CD4-positive, alpha-beta T cell (primary cell): ENCODE measurements at regions of chr7 and their contacts with region 1.

Region 1: GRCh38 chr7:100271716-100272537 is 35.6 kb upstream of the SPDYE3 start:
- DNase-seq: peak; percentile 97 to 100 (median 98)
- ATAC-seq: peak; percentile 91
- H3K4me3 ChIP-seq: peak overlapping the region; percentile 52
- H3K4me3 Mint-ChIP-seq: peak overlapping the region; percentile 85
- H3K27ac ChIP-seq: no peak overlapping the region
- H3K27ac Mint-ChIP-seq: peak overlapping the region; percentile 69
- H3K4me1 ChIP-seq: peaks cover 17% of the 10 kb centered on the region
- H3K4me1 Mint-ChIP-seq: peaks cover 8% of the 10 kb centered on the region
- H3K27me3 ChIP-seq: no peaks in the 10 kb centered on the region
- H3K27me3 Mint-ChIP-seq: no peaks in the 10 kb centered on the region
- CTCF ChIP-seq: no peak

Region 2: DNA sequence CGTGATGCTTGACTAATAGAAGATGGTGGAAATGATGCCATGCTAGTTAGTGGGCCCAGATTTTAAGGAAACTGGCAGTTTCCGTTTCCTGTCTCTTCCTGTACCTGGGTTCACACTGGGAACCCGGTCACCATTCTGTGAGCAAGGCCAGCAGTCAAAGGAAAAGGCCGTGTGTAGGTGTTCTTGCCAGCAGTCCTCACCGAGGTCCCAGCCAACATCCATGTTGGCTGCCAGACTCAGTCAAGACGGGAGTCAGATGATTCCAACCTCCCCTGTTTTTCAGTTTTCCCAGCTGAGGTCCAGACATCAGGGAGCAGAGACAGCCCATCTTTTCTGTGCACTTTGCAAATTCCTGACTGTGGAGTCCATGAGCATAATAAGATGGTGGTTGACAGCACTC is 70.8 kb after region 1 on chr7:
- CTCF ChIA-PET with region 1: interaction called, 9 read pairs
- POLR2A ChIA-PET with region 1: no interaction called
- intact Hi-C with region 1: loop called (anchors 10 kb)
- DNase-seq: peak in 1 of 14 experiments; percentile 9
- ATAC-seq: no peak
- H3K4me3 ChIP-seq: no peak overlapping the region
- H3K4me3 Mint-ChIP-seq: no peak overlapping the region
- H3K27ac ChIP-seq: no peak overlapping the region
- H3K27ac Mint-ChIP-seq: peak overlapping the region; percentile 78
- H3K4me1 ChIP-seq: peaks cover 18% of the 10 kb centered on the region
- H3K4me1 Mint-ChIP-seq: peaks cover 33% of the 10 kb centered on the region
- H3K27me3 ChIP-seq: no peaks in the 10 kb centered on the region
- H3K27me3 Mint-ChIP-seq: no peaks in the 10 kb centered on the region
- CTCF ChIP-seq: no peak

Region 3: DNA sequence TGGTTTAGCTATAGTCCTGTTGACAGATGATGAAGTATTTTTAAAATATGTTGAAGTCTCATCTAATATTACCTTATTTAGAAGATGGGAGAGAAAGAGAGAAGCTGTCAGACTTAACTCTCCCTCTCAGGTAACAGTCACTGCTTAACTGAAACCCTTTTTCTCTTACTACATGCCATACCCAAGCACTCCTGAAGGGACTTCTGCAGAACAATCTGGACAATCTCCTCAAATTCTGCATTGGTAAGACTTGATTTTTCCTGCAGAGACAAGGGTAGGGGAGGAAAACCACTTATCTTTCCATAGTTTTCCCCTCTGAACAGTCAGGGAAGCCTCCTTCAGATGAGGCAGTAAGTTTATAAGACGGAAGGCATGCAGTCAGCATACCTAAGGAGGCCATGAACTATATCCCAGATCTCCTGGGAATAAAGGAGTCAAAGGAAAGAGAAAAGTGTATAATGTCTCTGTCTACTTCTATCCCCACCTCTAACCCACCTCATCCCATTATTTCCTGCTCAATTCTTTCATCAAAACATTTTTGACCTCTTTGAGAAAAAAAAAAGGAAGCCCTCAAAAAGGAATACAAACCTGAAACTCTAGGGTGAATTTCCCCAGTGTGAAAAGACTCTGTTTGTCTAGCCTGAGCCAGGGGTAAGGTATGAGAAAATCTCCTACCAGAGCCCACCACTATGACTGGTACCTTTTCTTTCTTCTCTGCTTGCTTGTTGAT is 147.2 kb after region 1 on chr7:
- CTCF ChIA-PET with region 1: no interaction called
- POLR2A ChIA-PET with region 1: no interaction called
- intact Hi-C with region 1: no loop called
- DNase-seq: no peak
- ATAC-seq: no peak
- H3K4me3 ChIP-seq: no peak overlapping the region
- H3K4me3 Mint-ChIP-seq: no peak overlapping the region
- H3K27ac ChIP-seq: no peak overlapping the region
- H3K27ac Mint-ChIP-seq: no peak overlapping the region
- H3K4me1 ChIP-seq: no peaks in the 10 kb centered on the region
- H3K4me1 Mint-ChIP-seq: no peaks in the 10 kb centered on the region
- H3K27me3 ChIP-seq: no peaks in the 10 kb centered on the region
- H3K27me3 Mint-ChIP-seq: no peaks in the 10 kb centered on the region
- CTCF ChIP-seq: no peak